Activated CD4-positive, alpha-beta memory T cell treated with anti-CD3 and anti-CD28 coated beads, Interleukin-2, amount 10 ng/mL, durations not matched to agents 7 days and 5 days (primary cell): ENCODE measurements at regions of chr15 and their contacts with region 1.

Region 1: GRCh38 chr15:84600851-84601838 is at the start of gene ZSCAN2:
- DNase-seq: peak; percentile 96
- H3K4me3 Mint-ChIP-seq: peak within 1 kb of the TSS; percentile 91
- H3K27ac Mint-ChIP-seq: peak within 1 kb of the TSS; percentile 50
- H3K4me1 Mint-ChIP-seq: peaks cover 76% of the 10 kb centered on the region
- H3K27me3 Mint-ChIP-seq: no peaks in the 10 kb centered on the region
- total RNA-seq, gene ZSCAN2: 10.8 to 10.9 TPM

Region 2: DNA sequence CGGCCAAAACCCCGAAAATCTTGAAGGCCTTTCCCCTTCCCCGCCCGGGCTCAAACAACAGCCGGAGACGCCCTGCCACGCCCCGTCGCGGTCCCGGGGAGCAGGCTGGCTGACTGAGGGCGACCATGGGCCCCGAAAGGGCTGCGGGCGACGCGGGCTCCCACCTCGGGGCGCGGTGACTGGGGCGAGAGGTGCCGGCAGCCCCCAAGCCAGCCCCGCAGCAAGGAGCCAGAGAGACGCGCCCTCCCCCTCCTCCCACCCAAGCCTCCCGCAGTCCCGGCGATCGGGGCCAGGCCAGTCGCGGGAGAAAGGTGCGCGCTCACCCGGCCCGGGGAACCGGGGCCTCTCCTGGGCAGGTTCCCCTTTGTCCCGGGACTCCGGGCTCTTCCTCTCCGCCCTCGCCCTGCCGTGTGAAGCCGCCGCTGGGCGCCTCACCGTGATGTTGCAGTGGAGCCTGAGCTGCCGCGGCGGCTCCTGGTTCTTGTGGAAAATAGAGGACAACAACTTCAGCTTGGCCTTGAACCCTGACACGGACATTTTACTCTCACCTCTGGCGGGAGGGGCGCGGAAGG is 30.9 kb before region 1 on chr15:
- CTCF ChIA-PET with region 1: interaction called, 17 read pairs
- POLR2A ChIA-PET with region 1: interaction called, 11 read pairs
- DNase-seq: peak; percentile 70
- H3K4me3 Mint-ChIP-seq: peak overlapping the region; percentile 88
- H3K27ac Mint-ChIP-seq: peak overlapping the region; percentile 79
- H3K4me1 Mint-ChIP-seq: peaks cover 20% of the 10 kb centered on the region
- H3K27me3 Mint-ChIP-seq: peaks cover 2% of the 10 kb centered on the region

Region 3: GRCh38 chr15:84588053-84588874 is 12.9 kb before region 1 on chr15:
- CTCF ChIA-PET with region 1: interaction called, 22 read pairs
- POLR2A ChIA-PET with region 1: interaction called, 4 read pairs
- DNase-seq: peak; percentile 87
- H3K4me3 Mint-ChIP-seq: peak overlapping the region; percentile 43
- H3K27ac Mint-ChIP-seq: no peak overlapping the region
- H3K4me1 Mint-ChIP-seq: peaks cover 4% of the 10 kb centered on the region
- H3K27me3 Mint-ChIP-seq: peaks cover 14% of the 10 kb centered on the region

Region 4: GRCh38 chr15:84658080-84658787 is 57.1 kb after region 1 on chr15 and contains the start of gene NMB:
- CTCF ChIA-PET with region 1: interaction called, 22 read pairs
- POLR2A ChIA-PET with region 1: interaction called, 27 read pairs
- DNase-seq: peak; percentile 83
- H3K4me3 Mint-ChIP-seq: peak within 1 kb of the TSS; percentile 73
- H3K27ac Mint-ChIP-seq: peak within 1 kb of the TSS; percentile 76
- H3K4me1 Mint-ChIP-seq: peaks cover 35% of the 10 kb centered on the region
- H3K27me3 Mint-ChIP-seq: no peaks in the 10 kb centered on the region
- total RNA-seq, gene NMB: 4.0 to 4.1 TPM

Region 5: DNA sequence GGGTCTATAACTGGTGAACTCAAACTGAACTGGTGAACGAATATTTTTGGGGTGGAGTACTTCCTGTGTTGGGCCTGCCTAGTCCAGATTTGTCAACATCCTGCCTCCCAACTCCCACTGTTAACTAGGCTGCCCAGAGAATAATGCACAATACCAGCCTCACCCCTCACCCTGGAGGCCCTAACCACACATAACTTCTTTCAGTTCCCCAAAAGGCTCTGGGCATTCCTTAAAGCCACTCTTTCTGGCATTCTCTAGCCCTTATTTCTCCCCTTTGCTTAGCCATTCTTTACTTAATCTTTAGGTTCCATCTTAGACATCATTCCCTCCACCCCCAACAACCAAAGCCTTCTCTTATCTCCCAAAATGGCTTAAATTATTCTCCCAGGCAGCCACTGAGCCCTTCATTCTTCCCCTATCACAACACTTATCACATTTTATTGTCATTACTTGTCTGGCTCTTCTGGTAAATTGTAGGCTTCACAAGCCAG is 123.9 kb after region 1 on chr15:
- CTCF ChIA-PET with region 1: no interaction called
- POLR2A ChIA-PET with region 1: no interaction called
- DNase-seq: peak; percentile 57
- H3K4me3 Mint-ChIP-seq: peak overlapping the region; percentile 11
- H3K27ac Mint-ChIP-seq: peak overlapping the region; percentile 91
- H3K4me1 Mint-ChIP-seq: peaks cover 51% of the 10 kb centered on the region
- H3K27me3 Mint-ChIP-seq: no peaks in the 10 kb centered on the region

Region 6: GRCh38 chr15:84879088-84879792 is 278.1 kb after region 1 on chr15:
- CTCF ChIA-PET with region 1: interaction called, 18 read pairs
- POLR2A ChIA-PET with region 1: no interaction called
- DNase-seq: no peak
- H3K4me3 Mint-ChIP-seq: no peak overlapping the region
- H3K27ac Mint-ChIP-seq: no peak overlapping the region
- H3K4me1 Mint-ChIP-seq: no peaks in the 10 kb centered on the region
- H3K27me3 Mint-ChIP-seq: no peaks in the 10 kb centered on the region

Region 7: DNA sequence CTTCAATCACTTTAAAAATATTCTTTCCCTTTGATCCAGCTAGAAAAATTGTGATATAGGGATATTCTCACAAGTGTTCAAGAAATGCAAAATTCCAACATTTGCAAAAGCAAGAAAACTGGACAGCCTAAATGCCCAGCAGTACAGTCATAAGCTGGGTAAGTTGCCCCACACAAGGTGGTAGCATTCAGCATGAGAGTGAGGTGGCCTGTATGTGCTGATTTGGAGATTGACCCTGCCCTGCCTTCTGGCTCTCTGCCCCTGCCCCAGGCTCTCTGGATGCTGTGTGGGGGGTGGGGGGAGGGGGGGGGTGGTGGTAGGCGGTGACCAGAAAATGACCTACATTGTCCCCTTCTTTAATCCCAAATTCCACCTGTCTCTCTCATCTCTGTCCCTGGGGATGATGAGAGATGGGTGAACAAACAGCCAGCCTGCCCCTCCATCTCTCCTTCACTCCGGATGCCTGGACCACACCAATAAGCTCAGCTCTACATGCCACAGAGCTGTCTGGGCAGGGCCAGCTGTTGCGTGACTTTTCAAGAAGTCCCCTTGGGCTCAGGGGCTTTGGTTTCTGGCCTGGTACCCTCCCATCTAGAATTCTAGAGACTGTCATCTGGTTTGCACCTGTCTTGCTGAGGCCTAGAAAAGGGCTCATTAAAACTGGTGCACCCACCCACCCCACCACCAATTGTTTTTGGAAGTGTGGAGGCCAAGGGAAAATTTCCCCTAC is 325.5 kb after region 1 on chr15:
- CTCF ChIA-PET with region 1: interaction called, 14 read pairs
- POLR2A ChIA-PET with region 1: no interaction called
- DNase-seq: no peak
- H3K4me3 Mint-ChIP-seq: no peak overlapping the region
- H3K27ac Mint-ChIP-seq: no peak overlapping the region
- H3K4me1 Mint-ChIP-seq: peaks cover 11% of the 10 kb centered on the region
- H3K27me3 Mint-ChIP-seq: no peaks in the 10 kb centered on the region